ENCODE measurements at regions of chr11 and their contacts with region 1.

Region 1: GRCh38 chr11:76919887-76920746 is 59.4 kb downstream of the ACER3 start:
- DNase-seq: peak; percentile 43
- ATAC-seq: peak; percentile 90
- H3K4me3 ChIP-seq: 0 out of 2 replicates have a peak overlapping the region, but pooled peaks have one; percentile 18
- H3K27ac ChIP-seq: no peak overlapping the region
- H3K4me1 ChIP-seq: no peaks in the 10 kb centered on the region
- H3K27me3 ChIP-seq: no peaks in the 10 kb centered on the region
- CTCF ChIP-seq: peak; percentile 78 to 91 (median 83)
- EP300 ChIP-seq: no peak
- POLR2A ChIP-seq: no peak
- RAD21 ChIP-seq: peak; percentile 85

Region 2: DNA sequence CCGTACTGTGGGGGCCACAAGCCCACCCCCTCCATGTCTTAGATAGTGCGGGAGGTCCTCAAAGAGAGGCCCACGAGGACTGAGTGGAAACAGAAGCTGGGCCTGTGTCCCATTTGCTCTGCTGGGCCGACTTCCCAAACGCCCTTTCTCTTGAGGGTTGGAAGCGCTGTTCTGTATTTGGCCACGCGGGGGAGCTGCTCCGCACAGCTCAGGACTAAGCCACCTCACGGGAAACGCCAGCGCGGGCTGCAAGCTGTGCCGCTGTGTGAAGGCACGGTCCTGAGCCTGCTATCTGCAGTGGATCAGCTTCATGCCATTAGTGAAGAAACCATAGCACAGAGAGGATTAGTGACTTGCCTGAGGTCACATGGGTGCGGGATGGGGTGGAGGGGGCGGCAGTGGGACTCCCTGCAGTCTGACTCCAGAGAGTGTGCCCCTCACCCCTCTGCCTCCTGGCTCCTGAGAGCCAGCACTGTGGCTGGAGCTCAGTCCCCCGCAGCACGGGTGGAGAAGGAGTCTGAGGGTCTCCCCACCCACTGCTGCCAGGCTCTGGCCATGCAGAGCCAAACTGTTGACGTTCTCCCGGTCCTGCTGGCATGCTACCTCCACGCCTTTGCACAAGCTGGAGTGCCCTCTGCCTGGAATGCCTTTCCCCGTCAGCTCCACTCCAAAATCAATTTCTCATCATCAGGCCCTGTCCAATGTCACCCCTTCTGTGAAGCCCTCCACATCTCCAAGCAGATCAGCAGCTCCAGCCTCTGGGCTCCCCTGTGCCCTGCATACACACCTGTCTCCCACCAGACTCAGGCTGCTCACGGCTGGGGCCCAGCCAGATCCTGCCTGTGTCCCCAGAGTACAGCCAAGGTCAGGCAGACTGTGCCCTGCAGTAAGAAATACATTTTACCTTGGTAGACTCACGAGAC is 198.1 kb before region 1 on chr11:
- CTCF ChIA-PET with region 1: interaction called, 11 read pairs
- POLR2A ChIA-PET with region 1: no interaction called
- RAD21 ChIA-PET with region 1: interaction called, 5 read pairs
- SMC1A ChIA-PET with region 1: interaction called, 3 read pairs
- in situ Hi-C with region 1: no loop called
- intact Hi-C with region 1: no loop called
- DNase-seq: no peak
- ATAC-seq: peak; percentile 98
- H3K4me3 ChIP-seq: no peak overlapping the region
- H3K27ac ChIP-seq: no peak overlapping the region
- H3K4me1 ChIP-seq: no peaks in the 10 kb centered on the region
- H3K27me3 ChIP-seq: peaks cover 0 to 4% of the 10 kb centered on the region in 2 experiments; a peak in 2 of 4 replicates
- CTCF ChIP-seq: peak; percentile 86 to 94 (median 87)
- EP300 ChIP-seq: no peak
- POLR2A ChIP-seq: no peak
- RAD21 ChIP-seq: peak; percentile 58

Region 3: GRCh38 chr11:76807206-76807875 is 112.8 kb before region 1 on chr11:
- CTCF ChIA-PET with region 1: interaction called, 229 read pairs
- POLR2A ChIA-PET with region 1: interaction called, 4 read pairs
- RAD21 ChIA-PET with region 1: interaction called, 44 read pairs
- SMC1A ChIA-PET with region 1: interaction called, 88 read pairs
- in situ Hi-C with region 1: loop called (anchors 5 kb)
- intact Hi-C with region 1: loop called (anchors 1 kb)
- DNase-seq: no peak
- ATAC-seq: peak; percentile 91
- H3K4me3 ChIP-seq: no peak overlapping the region
- H3K27ac ChIP-seq: no peak overlapping the region
- H3K4me1 ChIP-seq: no peaks in the 10 kb centered on the region; the same call in 1 of the 2 replicates
- H3K27me3 ChIP-seq: peaks cover 0 to 2% of the 10 kb centered on the region in 2 experiments; a peak in 1 of 4 replicates
- CTCF ChIP-seq: peak; percentile 72 to 76 (median 72)
- EP300 ChIP-seq: no peak
- POLR2A ChIP-seq: no peak
- RAD21 ChIP-seq: peak; percentile 50; the same call in 1 of the 2 replicates

Region 4: GRCh38 chr11:76860539-76861475 is 59.3 kb before region 1 on chr11 and contains the start of gene ACER3:
- CTCF ChIA-PET with region 1: interaction called, 13 read pairs
- POLR2A ChIA-PET with region 1: no interaction called
- RAD21 ChIA-PET with region 1: interaction called, 5 read pairs
- SMC1A ChIA-PET with region 1: interaction called, 5 read pairs
- in situ Hi-C with region 1: no loop called
- intact Hi-C with region 1: no loop called
- DNase-seq: peak; percentile 45
- ATAC-seq: peak; percentile 96
- H3K4me3 ChIP-seq: peak within 1 kb of the TSS; percentile 88
- H3K27ac ChIP-seq: peak within 1 kb of the TSS; percentile 81
- H3K4me1 ChIP-seq: peaks cover 8% of the 10 kb centered on the region
- H3K27me3 ChIP-seq: no peaks in the 10 kb centered on the region
- CTCF ChIP-seq: no peak
- EP300 ChIP-seq: no peak
- POLR2A ChIP-seq: peak; percentile 93
- RAD21 ChIP-seq: no peak
- polyA plus RNA-seq, gene ACER3: 2.8 to 3.6 TPM

Region 5: GRCh38 chr11:76897233-76897632 is 22.9 kb before region 1 on chr11:
- CTCF ChIA-PET with region 1: interaction called, 23 read pairs
- POLR2A ChIA-PET with region 1: no interaction called
- RAD21 ChIA-PET with region 1: interaction called, 8 read pairs
- SMC1A ChIA-PET with region 1: interaction called, 4 read pairs
- in situ Hi-C with region 1: no loop called
- intact Hi-C with region 1: no loop called
- DNase-seq: no peak
- ATAC-seq: no peak
- H3K4me3 ChIP-seq: no peak overlapping the region
- H3K27ac ChIP-seq: no peak overlapping the region
- H3K4me1 ChIP-seq: no peaks in the 10 kb centered on the region
- H3K27me3 ChIP-seq: no peaks in the 10 kb centered on the region
- CTCF ChIP-seq: no peak
- EP300 ChIP-seq: no peak
- POLR2A ChIP-seq: no peak
- RAD21 ChIP-seq: no peak

Region 6: DNA sequence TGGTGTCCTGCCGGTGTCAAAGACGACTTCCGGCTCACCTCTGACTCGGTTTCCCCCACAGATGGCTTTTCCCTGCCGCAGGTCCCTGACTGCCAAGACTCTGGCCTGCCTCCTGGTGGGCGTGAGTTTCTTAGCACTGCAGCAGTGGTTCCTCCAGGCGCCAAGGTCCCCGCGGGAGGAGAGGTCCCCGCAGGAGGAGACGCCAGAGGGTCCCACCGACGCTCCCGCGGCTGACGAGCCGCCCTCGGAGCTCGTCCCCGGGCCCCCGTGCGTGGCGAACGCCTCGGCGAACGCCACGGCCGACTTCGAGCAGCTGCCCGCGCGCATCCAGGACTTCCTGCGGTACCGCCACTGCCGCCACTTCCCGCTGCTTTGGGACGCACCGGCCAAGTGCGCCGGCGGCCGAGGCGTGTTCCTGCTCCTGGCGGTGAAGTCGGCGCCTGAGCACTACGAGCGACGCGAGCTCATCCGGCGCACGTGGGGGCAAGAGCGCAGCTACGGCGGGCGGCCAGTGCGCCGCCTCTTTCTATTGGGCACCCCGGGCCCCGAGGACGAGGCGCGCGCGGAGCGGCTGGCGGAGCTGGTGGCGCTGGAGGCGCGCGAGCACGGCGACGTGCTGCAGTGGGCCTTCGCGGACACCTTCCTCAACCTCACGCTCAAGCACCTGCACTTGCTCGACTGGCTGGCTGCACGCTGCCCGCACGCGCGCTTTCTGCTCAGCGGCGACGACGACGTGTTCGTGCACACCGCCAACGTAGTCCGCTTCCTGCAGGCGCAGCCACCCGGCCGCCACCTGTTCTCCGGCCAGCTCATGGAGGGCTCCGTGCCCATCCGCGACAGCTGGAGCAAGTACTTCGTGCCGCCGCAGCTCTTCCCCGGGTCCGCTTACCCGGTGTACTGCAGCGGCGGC is 119.6 kb after region 1 on chr11:
- CTCF ChIA-PET with region 1: interaction called, 31 read pairs
- POLR2A ChIA-PET with region 1: no interaction called
- RAD21 ChIA-PET with region 1: interaction called, 8 read pairs
- SMC1A ChIA-PET with region 1: interaction called, 28 read pairs
- in situ Hi-C with region 1: no loop called
- intact Hi-C with region 1: loop called (anchors 1 kb)
- DNase-seq: no peak
- ATAC-seq: 0 out of 3 replicates have a peak, but pooled peaks have one; percentile 20
- H3K4me3 ChIP-seq: no peak overlapping the region
- H3K27ac ChIP-seq: no peak overlapping the region
- H3K4me1 ChIP-seq: peaks cover 6% of the 10 kb centered on the region
- H3K27me3 ChIP-seq: peaks cover 1 to 4% of the 10 kb centered on the region in 2 experiments; a peak in 3 of 4 replicates
- CTCF ChIP-seq: peak; percentile 36 to 46 (median 41); a peak in 4 of 6 replicates
- EP300 ChIP-seq: no peak
- POLR2A ChIP-seq: no peak
- RAD21 ChIP-seq: peak; percentile 13; the same call in 1 of the 2 replicates

Region 7: DNA sequence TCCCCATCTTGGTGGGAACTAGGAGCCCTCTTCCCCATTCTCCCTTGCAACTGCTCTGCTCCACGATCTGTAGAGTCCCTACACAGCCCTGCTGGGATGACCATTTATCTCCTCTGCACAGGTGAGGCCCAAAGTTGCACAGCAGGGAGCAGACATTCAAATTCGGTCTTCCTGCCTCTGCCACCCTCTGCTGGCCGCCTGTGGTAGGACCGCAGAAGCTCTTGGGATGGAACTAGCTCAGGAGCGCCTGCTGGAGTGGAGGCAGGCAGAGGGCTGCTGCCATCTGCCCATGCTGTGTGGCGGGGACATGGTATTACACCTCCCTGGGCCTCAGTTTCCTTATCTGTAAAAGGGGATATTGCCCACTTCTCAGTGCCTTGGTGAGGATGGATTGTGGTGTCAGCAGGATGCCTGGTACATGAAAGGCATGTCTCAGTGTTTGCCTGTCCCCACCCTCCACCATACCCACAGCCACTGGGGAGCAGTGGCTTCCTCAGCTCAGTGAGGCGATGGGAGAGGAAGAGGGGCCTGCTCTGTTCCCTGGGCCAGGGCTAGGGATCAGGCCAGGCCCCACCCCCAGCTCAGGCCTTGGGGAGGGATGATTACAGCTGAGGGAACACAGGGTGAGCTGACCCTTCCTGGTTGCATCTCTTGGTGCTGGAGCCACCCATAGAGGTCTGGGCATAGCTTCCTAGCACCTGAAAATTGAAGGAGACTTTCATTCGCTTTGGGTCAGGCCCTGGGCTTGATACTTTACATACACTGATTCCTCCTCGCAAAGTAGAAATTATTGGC is 171.2 kb after region 1 on chr11:
- CTCF ChIA-PET with region 1: interaction called, 146 read pairs
- POLR2A ChIA-PET with region 1: interaction called, 3 read pairs
- RAD21 ChIA-PET with region 1: interaction called, 84 read pairs
- SMC1A ChIA-PET with region 1: interaction called, 28 read pairs
- in situ Hi-C with region 1: no loop called
- intact Hi-C with region 1: loop called (anchors 1 kb)
- DNase-seq: no peak
- ATAC-seq: peak; percentile 97
- H3K4me3 ChIP-seq: no peak overlapping the region
- H3K27ac ChIP-seq: no peak overlapping the region
- H3K4me1 ChIP-seq: no peaks in the 10 kb centered on the region
- H3K27me3 ChIP-seq: no peaks in the 10 kb centered on the region
- CTCF ChIP-seq: peak; percentile 96 to 98 (median 97)
- EP300 ChIP-seq: no peak
- POLR2A ChIP-seq: no peak
- RAD21 ChIP-seq: peak; percentile 95